SK-N-SH (cell line): ENCODE measurements at regions of chr17 and their contacts with region 1.

Region 1: DNA sequence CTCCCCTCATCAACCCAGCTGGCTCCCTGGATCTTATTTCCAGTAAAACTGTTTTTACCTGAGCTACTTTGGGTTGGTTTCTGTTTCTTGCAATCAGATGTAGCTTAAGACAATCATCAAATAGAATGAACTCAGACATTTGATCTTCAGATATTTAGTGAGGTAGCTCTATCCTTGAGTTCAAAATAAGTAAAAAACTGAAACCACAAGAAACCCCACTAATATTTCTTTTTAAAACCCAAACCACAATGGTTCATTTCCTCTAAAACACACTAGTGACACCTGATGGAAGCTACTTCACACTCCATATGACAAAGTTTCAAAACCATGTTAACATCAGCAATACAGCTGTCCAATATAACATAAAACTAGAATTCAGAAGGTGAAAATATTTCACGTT is 37.8 kb downstream of the CACNG1 start:
- DNase-seq: no peak
- H3K4me3 ChIP-seq: no peak overlapping the region
- H3K27ac ChIP-seq: peak overlapping the region in 1 of 2 experiments; percentile 36; a peak in 1 of 4 replicates
- H3K4me1 ChIP-seq: peaks cover 0 to 10% of the 10 kb centered on the region in 2 experiments; a peak in 2 of 4 replicates
- H3K27me3 ChIP-seq: no peaks in the 10 kb centered on the region
- CTCF ChIP-seq: no peak
- EP300 ChIP-seq: no peak
- RAD21 ChIP-seq: peak; percentile 68

Region 2: DNA sequence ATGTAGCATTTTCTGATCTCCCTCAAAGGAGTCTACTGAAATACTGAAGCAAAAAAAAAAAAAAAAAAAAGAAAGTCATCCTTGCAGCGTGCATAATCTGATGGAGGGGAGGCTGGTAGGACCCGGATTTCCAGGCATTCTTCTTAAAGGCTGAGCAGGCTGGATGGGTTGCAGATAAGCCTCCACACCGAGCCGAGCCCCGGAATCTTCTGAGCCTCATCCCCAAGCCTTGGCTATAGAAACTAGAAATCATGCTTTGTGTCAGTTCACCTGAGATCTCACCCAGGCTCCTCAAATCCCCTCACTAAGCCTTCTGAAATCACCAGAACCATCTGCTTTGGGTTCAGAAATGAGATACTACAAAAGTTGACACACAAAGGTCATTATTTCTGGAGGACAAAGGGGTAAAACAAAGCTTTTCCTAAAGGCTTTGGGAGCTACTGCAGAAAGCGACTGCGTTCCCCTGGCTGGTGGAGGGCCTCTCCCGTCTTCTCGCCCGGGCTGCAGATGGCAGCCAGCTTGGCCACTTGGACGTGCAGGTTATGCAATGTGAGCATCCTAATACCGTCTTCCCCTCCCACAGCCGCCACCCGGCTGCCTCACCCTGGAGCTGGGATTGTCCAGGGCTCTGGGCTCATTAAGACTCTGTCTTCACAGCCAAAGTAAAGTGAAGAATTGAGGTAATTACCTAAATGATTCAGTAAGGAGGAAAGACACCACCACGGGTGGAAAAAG is 122.3 kb before region 1 on chr17:
- CTCF ChIA-PET with region 1: no interaction called
- POLR2A ChIA-PET with region 1: no interaction called
- DNase-seq: no peak
- H3K4me3 ChIP-seq: no peak overlapping the region
- H3K27ac ChIP-seq: peak overlapping the region in 1 of 2 experiments; percentile 48; a peak in 2 of 4 replicates
- H3K4me1 ChIP-seq: peaks cover 0 to 55% of the 10 kb centered on the region in 2 experiments; a peak in 1 of 4 replicates
- H3K27me3 ChIP-seq: no peaks in the 10 kb centered on the region
- CTCF ChIP-seq: no peak
- EP300 ChIP-seq: 0 out of 4 replicates have a peak, but pooled peaks of 1 of the 2 experiments have one; percentile 9
- RAD21 ChIP-seq: no peak

Region 3: GRCh38 chr17:67068999-67069398 is 13.1 kb before region 1 on chr17:
- CTCF ChIA-PET with region 1: interaction called, 21 read pairs
- POLR2A ChIA-PET with region 1: no interaction called
- DNase-seq: no peak
- H3K4me3 ChIP-seq: no peak overlapping the region
- H3K27ac ChIP-seq: no peak overlapping the region
- H3K4me1 ChIP-seq: peaks cover 0 to 26% of the 10 kb centered on the region in 2 experiments; a peak in 1 of 4 replicates
- H3K27me3 ChIP-seq: no peaks in the 10 kb centered on the region
- CTCF ChIP-seq: no peak
- EP300 ChIP-seq: no peak
- RAD21 ChIP-seq: no peak